Right cardiac atrium (tissue), 5 donors: ENCODE measurements at regions of chr17 and their contacts with region 1.

Region 1: DNA sequence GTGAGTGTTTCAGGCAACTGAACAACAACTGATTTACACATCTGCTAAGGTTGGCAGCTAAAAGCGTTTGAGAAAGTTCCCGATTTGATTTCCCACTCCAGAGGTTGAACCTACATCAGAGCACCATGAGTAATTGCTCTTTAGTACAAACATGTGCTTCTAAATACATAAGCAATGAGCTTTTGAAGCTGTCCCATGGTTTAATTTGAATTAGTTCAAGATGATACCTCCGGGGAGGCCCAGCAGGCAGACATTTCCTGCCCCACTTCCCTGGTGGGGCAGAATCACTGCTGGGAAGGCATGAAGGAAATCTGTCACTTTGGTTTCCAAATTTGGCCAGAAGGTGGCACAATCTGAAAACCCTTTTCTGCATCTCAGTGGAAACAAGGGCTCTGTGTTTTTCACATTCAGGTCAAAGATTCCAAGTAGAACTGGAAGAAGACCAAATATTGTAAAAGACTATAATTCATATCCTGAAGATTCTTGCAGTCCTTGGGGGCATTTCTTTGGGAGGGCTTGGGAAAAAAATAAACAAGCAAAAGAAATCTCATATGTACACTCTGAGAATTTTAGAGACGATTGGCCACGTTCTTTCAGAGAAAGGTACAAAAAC is 176.2 kb upstream of the FAM20A start:
- DNase-seq: peak; percentile 41 to 66 (median 63)
- ATAC-seq: peak; percentile 81
- H3K4me3 ChIP-seq: no peak overlapping the region
- H3K27ac ChIP-seq: peak overlapping the region; percentile 20
- H3K4me1 ChIP-seq: peaks cover 3% of the 10 kb centered on the region
- H3K27me3 ChIP-seq: no peaks in the 10 kb centered on the region

Region 2: GRCh38 chr17:68711848-68712247 is 65.5 kb before region 1 on chr17:
- intact Hi-C with region 1: no loop called
- DNase-seq: no peak
- ATAC-seq: peak in 1 of 2 donors; percentile 43
- H3K4me3 ChIP-seq: no peak overlapping the region
- H3K27ac ChIP-seq: no peak overlapping the region
- H3K4me1 ChIP-seq: peaks cover 2% of the 10 kb centered on the region
- H3K27me3 ChIP-seq: no peaks in the 10 kb centered on the region

Region 3: GRCh38 chr17:68733241-68734176 is 43.8 kb before region 1 on chr17:
- intact Hi-C with region 1: no loop called
- DNase-seq: peak in 2 of 3 donors; percentile 22 to 54
- ATAC-seq: peak; percentile 85 to 88
- H3K4me3 ChIP-seq: no peak overlapping the region
- H3K27ac ChIP-seq: peak overlapping the region; percentile 9
- H3K4me1 ChIP-seq: peaks cover 12% of the 10 kb centered on the region
- H3K27me3 ChIP-seq: no peaks in the 10 kb centered on the region

Region 4: GRCh38 chr17:68800751-68801150 is 23.4 kb after region 1 on chr17:
- intact Hi-C with region 1: no loop called
- DNase-seq: no peak
- ATAC-seq: no peak
- H3K4me3 ChIP-seq: no peak overlapping the region
- H3K27ac ChIP-seq: no peak overlapping the region
- H3K4me1 ChIP-seq: no peaks in the 10 kb centered on the region
- H3K27me3 ChIP-seq: no peaks in the 10 kb centered on the region

Region 5: GRCh38 chr17:68909066-68909465 is 131.7 kb after region 1 on chr17:
- intact Hi-C with region 1: loop called in 2 of 4 experiments (anchors 5 kb)
- DNase-seq: peak in 2 of 3 donors; percentile 52 to 59
- ATAC-seq: peak; percentile 83 to 91
- H3K4me3 ChIP-seq: no peak overlapping the region
- H3K27ac ChIP-seq: peak overlapping the region; percentile 15
- H3K4me1 ChIP-seq: peaks cover 9% of the 10 kb centered on the region
- H3K27me3 ChIP-seq: no peaks in the 10 kb centered on the region

Region 6: GRCh38 chr17:68972119-68972704 is 194.9 kb after region 1 on chr17:
- intact Hi-C with region 1: loop called (anchors 5 to 10 kb)
- DNase-seq: peak in 1 of 3 donors; percentile 5
- ATAC-seq: peak in 1 of 2 donors; percentile 64
- H3K4me3 ChIP-seq: no peak overlapping the region
- H3K27ac ChIP-seq: no peak overlapping the region
- H3K4me1 ChIP-seq: no peaks in the 10 kb centered on the region
- H3K27me3 ChIP-seq: no peaks in the 10 kb centered on the region

Region 7: DNA sequence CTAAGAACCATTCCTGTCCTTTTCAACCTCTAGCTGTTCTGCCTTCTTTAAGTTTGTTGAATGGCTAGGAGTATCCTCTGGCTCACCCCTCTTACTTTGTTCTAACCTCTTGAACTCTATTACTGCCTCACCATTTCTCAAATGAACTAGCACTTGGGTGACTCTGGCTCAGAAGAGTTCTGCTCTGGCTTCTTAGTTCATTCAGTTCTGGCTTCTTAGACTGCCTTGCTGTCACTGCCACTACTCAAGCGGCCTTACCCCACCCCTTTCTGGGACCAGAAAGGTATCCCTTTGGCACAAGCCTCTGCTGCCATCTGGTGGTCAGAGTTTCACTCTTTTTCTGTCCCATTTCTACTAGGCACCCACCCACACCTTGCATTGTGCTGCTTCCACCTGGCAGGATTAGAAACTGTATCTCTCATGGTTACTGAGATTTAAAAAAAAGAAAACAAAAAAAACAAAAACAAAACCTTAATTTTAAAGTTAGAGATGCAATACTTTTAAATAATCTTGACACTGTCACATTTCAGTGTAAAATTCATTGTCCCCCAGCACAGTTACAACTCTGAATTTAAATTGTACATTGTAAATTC is 458.1 kb after region 1 on chr17:
- intact Hi-C with region 1: loop called in 3 of 4 experiments (anchors 5 kb)
- DNase-seq: peak; percentile 84 to 88 (median 88)
- ATAC-seq: peak; percentile 94 to 96
- H3K4me3 ChIP-seq: no peak overlapping the region
- H3K27ac ChIP-seq: no peak overlapping the region
- H3K4me1 ChIP-seq: peaks cover 2% of the 10 kb centered on the region
- H3K27me3 ChIP-seq: no peaks in the 10 kb centered on the region

Region 8: GRCh38 chr17:69246726-69247375 is 469.5 kb after region 1 on chr17:
- intact Hi-C with region 1: loop called in 1 of 4 experiments (anchors 5 kb)
- DNase-seq: no peak
- ATAC-seq: peak; percentile 34 to 64
- H3K4me3 ChIP-seq: no peak overlapping the region
- H3K27ac ChIP-seq: no peak overlapping the region
- H3K4me1 ChIP-seq: no peaks in the 10 kb centered on the region
- H3K27me3 ChIP-seq: no peaks in the 10 kb centered on the region